OCI-LY7 (cell line): ENCODE measurements at regions of chr17 and their contacts with region 1.

Region 1: GRCh38 chr17:82051776-82052637 is at the starts of genes GPS1 and RFNG:
- DNase-seq: peak; percentile 87
- H3K4me3 ChIP-seq: peak within 1 kb of the TSS; percentile 75
- H3K27ac ChIP-seq: no peak within 1 kb of the TSS
- H3K4me1 ChIP-seq: peaks cover 21% of the 10 kb centered on the region
- CTCF ChIP-seq: no peak
- total RNA-seq, gene GPS1: 137 and 169 TPM in 2 replicates
- total RNA-seq, gene RFNG: 50.5 and 59.4 TPM in 2 replicates

Region 2: DNA sequence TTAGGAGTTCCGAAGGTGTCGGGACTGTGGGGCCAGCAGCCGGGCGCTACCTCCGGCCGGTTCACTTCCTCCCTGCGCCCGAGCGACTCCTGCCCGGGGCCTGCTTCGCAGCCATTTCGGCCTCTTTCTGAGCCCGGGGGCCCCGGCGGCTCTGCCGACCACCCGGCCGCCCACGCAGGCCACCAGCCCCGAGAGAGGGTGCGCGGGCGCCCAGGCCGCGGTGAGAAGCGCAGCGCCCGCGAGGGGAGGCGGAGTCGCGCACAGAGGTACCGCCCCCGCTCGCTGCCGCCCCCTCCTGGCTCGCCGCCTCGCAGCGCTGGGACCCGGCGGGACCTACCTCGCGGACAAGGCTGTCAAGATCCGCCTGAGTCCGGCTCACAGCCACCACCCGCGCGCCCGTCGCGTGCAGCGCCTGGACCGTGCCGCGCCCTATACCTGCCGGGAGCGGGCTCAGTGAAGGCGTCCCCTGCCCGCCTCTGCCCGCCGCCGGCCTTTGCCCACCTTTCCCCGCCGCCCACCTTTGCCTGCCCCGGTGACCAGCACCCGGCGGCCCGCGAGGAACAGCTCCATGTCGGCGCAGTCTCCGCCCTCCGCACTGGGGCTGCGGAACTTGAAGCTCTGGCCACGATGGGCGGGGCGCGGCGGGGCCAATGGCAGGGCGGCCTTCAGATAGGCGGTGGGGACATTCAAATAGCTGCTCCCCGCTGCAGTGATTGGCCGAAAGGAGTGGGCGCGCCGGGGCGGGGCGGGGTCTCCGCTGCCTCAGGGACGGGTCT is 14.7 kb before region 1 on chr17 and contains the start of gene DCXR:
- CTCF ChIA-PET with region 1: interaction called, 3 read pairs
- POLR2A ChIA-PET with region 1: interaction called, 4 read pairs
- intact Hi-C with region 1: loop called (anchors 1 kb)
- DNase-seq: peak; percentile 99
- H3K4me3 ChIP-seq: peak within 1 kb of the TSS; percentile 72
- H3K27ac ChIP-seq: peak within 1 kb of the TSS; percentile 70
- H3K4me1 ChIP-seq: peaks cover 19% of the 10 kb centered on the region
- CTCF ChIP-seq: peak; percentile 91
- total RNA-seq, gene DCXR: 138 and 147 TPM in 2 replicates

Region 3: GRCh38 chr17:82077617-82078358 is 25.8 kb after region 1 on chr17:
- CTCF ChIA-PET with region 1: no interaction called
- POLR2A ChIA-PET with region 1: no interaction called
- intact Hi-C with region 1: no loop called
- DNase-seq: no peak
- H3K4me3 ChIP-seq: no peak overlapping the region
- H3K27ac ChIP-seq: no peak overlapping the region
- H3K4me1 ChIP-seq: peaks cover 25% of the 10 kb centered on the region
- CTCF ChIP-seq: no peak